Posterior vena cava (tissue), 2 donors: ENCODE measurements at regions of chr1 and their contacts with region 1.

Region 1: GRCh38 chr1:178501705-178502329 is 5.1 kb upstream of the CLEC20A start:
- DNase-seq: peak; percentile 90

Region 2: DNA sequence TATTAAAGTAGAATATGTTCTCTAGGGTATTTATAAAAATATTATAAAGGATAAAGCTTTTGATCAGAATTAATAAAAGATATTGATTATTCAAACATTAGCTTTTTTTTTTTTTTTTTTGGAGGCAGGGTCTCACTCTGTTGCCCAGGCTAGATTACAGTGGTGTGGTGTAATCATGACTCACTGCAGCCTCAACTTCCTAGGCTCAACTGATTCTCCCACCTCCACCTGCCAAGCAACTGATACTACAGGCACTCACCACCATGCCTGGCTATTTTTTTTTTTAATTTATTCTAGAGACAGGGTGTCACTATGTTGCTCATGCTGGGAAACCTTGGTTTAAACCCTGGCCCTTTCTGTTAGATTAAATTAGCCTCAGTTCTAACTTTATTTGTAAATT is 193.4 kb before region 1 on chr1:
- intact Hi-C with region 1: loop called in 1 of 2 experiments (anchors 5 kb)
- DNase-seq: no peak

Region 3: GRCh38 chr1:178552856-178553255 is 51.0 kb after region 1 on chr1:
- intact Hi-C with region 1: loop called in 1 of 2 experiments (anchors 2 kb)
- DNase-seq: no peak